Activated naive CD4-positive, alpha-beta T cell treated with anti-CD3 and anti-CD28 coated beads for 36 hours (primary cell): ENCODE measurements at regions of chr5 and their contacts with region 1.

Region 1: DNA sequence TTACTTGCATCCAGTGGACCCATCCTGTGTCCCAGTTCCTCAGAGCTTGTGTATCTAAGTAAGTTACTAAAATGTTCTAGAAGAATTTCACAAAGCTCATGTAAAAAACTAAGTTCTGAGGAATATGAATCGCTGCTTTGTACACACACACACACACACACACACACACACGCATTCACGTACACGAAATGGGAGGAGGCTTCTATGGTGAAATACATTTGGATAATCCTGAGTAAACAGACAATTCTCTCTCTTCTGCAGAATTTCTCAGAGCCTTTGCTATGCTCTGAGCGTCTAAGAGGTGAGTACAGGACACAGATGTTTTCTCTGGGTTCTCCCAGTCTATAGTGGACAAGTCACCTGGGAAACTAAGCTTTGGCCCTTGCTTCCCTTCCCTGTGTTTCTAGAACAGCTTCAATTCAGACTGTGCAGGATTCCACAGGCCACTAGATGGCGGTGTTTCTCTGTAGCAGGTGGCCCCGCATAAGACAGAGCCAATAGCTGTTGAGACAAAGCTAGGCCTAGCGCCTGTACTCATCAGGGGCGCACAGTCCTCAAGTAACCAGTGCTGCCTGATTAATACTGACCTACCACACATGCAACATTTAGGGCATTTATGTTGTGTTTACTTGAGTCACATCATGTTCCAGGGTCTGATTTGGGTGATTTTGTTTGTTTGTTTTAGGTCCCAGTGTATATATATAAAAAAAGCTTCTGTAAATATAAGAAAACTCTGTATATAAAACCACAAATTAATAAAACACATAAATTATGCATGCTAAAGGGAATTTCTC is 114.8 kb downstream of the LIFR start:
- DNase-seq: peak; percentile 92
- H3K4me3 Mint-ChIP-seq: no peak overlapping the region
- H3K27ac Mint-ChIP-seq: no peak overlapping the region
- H3K4me1 Mint-ChIP-seq: no peaks in the 10 kb centered on the region
- H3K27me3 Mint-ChIP-seq: peaks cover 40% of the 10 kb centered on the region

Region 2: DNA sequence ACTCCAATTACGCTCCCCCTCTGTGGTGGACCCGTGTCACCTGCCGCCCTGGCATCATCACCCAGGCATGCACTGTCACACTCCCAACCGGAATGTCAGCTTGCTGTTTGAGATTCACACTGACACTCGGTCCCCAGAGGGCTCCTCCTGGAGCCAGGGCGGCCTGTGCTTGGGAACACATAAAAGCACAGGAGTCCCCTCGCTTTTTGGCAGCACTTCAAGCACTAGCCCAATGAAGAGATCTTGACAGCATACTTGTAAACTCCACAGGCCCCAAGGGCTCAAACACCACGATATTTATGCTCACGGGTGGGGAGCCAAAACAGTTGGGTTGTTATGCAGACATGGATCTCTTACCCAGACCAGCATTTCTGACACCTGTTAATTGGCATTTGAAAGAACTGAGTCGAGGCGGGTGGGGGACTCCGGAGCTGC is 274.1 kb before region 1 on chr5:
- CTCF ChIA-PET with region 1: no interaction called
- intact Hi-C with region 1: no loop called
- DNase-seq: no peak
- H3K4me3 Mint-ChIP-seq: no peak overlapping the region
- H3K27ac Mint-ChIP-seq: no peak overlapping the region
- H3K4me1 Mint-ChIP-seq: no peaks in the 10 kb centered on the region
- H3K27me3 Mint-ChIP-seq: no peaks in the 10 kb centered on the region

Region 3: DNA sequence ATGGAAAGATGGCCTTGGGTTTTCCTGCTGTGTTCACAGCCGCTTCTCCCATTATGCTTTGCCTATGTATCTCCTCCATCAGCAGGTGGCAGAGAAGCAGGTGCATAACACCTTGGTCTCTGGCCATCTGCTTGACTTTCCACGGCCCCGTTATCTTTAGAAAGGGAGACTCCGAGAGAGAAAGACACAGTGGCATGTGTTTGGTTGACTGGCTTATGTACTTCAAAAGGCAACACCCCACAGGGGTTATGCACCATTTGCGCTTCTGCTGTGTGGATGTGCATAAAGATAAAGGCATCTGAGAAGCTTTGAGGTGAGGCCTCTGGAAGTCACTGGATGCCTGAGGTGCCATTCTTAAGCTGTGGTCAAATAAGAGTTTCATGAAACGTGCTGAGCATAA is 44.9 kb before region 1 on chr5:
- CTCF ChIA-PET with region 1: interaction called, 10 read pairs
- intact Hi-C with region 1: no loop called
- DNase-seq: no peak
- H3K4me3 Mint-ChIP-seq: no peak overlapping the region
- H3K27ac Mint-ChIP-seq: no peak overlapping the region
- H3K4me1 Mint-ChIP-seq: no peaks in the 10 kb centered on the region
- H3K27me3 Mint-ChIP-seq: peaks cover 13% of the 10 kb centered on the region

Region 4: GRCh38 chr5:38473008-38473407 is 31.4 kb after region 1 on chr5:
- CTCF ChIA-PET with region 1: interaction called, 13 read pairs
- intact Hi-C with region 1: no loop called
- DNase-seq: no peak
- H3K4me3 Mint-ChIP-seq: no peak overlapping the region
- H3K27ac Mint-ChIP-seq: no peak overlapping the region
- H3K4me1 Mint-ChIP-seq: no peaks in the 10 kb centered on the region
- H3K27me3 Mint-ChIP-seq: peaks cover 30% of the 10 kb centered on the region

Region 5: GRCh38 chr5:38666668-38667498 is 225.2 kb after region 1 on chr5:
- CTCF ChIA-PET with region 1: interaction called, 13 read pairs
- intact Hi-C with region 1: loop called (anchors 1 kb)
- DNase-seq: peak; percentile 10
- H3K4me3 Mint-ChIP-seq: no peak overlapping the region
- H3K27ac Mint-ChIP-seq: no peak overlapping the region
- H3K4me1 Mint-ChIP-seq: no peaks in the 10 kb centered on the region
- H3K27me3 Mint-ChIP-seq: peaks cover 4% of the 10 kb centered on the region

Region 6: GRCh38 chr5:38922199-38922598 is 480.5 kb after region 1 on chr5:
- CTCF ChIA-PET with region 1: interaction called, 15 read pairs
- intact Hi-C with region 1: loop called (anchors 1 kb)
- DNase-seq: peak; percentile 68
- H3K4me3 Mint-ChIP-seq: no peak overlapping the region
- H3K27ac Mint-ChIP-seq: no peak overlapping the region
- H3K4me1 Mint-ChIP-seq: no peaks in the 10 kb centered on the region
- H3K27me3 Mint-ChIP-seq: peaks cover 16% of the 10 kb centered on the region